ENCODE measurements at regions of chr6 and their contacts with region 1.

Region 1: DNA sequence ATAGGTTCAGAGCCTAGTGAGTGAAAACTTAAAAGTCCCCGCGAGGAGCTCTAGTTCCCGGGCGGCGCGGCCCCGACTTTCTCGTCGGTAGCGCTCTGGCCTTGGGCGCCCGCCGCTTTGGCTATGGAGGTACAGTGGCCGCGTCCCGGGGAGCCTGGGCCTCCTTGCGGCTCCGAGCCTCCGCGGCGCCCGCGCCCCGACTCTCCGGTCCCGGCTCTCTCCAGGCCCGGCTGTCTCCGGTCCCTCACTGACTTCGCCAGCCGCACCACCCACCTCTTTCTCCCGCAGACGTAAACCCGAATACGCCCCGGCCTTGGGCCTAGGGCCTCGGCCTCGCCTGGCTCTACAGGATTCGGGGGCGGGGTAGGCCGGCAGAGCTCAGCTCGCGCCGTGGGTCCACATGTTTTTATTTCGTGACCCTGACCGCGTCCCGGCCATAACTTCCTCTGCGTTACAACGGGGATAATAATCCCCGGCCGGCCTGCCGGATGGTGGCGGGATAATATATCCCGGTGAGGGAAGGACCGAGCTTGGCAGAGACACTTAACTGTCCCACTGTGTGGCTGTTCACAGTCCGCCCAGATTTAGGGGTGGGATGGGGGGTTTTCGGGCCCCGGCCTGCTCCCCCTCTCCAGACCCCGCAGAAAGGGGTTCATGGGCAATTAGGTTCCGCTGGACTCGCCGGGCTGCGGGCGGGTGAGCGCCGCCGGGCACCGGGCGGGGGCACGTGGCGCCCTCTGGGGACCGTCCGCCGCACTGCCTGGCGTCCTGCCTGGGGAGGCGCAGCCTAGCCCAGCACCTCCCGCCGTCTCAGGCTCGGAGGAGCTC is 10.0 kb upstream of the TBX18 start:
- DNase-seq: peak; percentile 30
- H3K4me3 Mint-ChIP-seq: no peak overlapping the region
- H3K27ac Mint-ChIP-seq: no peak overlapping the region
- H3K4me1 Mint-ChIP-seq: peaks cover 8% of the 10 kb centered on the region
- H3K27me3 Mint-ChIP-seq: peaks cover 61% of the 10 kb centered on the region

Region 2: DNA sequence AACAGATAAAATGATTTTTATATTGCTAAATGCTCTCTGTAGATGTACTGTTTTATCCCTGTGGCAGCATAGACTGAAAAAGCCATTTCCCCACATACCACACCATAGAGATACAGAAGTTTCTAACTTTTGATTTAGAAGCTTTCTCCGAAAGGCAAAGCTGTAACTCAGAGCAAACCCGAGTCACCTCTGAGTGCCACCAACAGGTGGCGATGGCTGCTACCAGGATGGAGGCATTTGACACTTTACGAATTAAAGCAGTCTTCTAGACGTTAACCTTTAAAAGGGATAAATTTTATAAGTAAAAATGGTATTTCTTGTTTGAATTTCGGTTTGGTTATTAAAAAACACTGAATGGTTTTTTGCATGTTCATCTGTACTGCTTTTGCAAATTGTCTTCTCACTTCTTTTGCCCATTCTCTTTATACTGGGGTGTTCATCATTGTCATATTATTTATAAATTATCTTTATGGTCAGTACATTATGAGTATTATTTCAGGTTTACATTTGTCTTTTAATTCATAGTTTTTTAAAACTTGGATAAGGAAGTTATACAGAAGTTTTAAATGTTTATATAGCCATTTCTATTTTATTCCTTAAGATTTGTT is 346.0 kb before region 1 on chr6:
- CTCF ChIA-PET with region 1: no interaction called
- intact Hi-C with region 1: loop called (anchors 2 kb)
- DNase-seq: peak; percentile 46
- H3K4me3 Mint-ChIP-seq: no peak overlapping the region
- H3K27ac Mint-ChIP-seq: no peak overlapping the region
- H3K4me1 Mint-ChIP-seq: no peaks in the 10 kb centered on the region
- H3K27me3 Mint-ChIP-seq: peaks cover 3% of the 10 kb centered on the region

Region 3: DNA sequence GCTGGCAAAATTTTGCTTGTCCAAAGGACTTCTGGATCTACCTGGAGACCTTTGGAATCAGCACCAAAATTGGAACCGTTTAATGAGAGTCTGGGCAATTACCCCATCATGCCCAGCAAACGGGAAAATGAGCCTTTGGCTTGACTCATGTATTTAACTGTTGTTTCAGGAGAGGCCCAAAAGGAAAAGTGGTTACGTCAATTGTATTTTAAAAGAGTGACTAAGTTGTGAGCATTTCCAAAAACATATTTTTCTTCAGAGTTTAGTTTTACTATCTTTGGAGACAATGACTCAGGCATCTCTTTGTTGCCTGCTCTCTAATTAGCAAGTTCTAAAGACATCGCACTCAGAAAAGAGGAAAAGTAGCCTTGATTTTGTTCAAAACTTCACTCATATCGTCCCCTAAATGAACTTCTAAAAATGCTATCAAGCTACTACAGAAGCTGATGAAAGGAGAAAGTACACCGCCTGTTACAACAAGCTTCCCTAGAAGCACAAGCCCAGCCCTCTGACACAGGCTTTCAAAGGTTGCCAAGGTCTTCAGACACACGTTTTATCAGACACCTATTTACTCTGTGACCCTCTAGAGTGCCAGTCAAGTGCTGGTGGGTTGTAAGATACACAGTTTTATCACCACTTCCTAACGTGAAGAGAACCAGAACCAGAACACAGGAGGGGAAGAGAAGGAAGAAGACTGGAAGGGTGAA is 156.2 kb before region 1 on chr6:
- CTCF ChIA-PET with region 1: no interaction called
- intact Hi-C with region 1: no loop called
- DNase-seq: no peak
- H3K4me3 Mint-ChIP-seq: no peak overlapping the region
- H3K27ac Mint-ChIP-seq: no peak overlapping the region
- H3K4me1 Mint-ChIP-seq: no peaks in the 10 kb centered on the region
- H3K27me3 Mint-ChIP-seq: no peaks in the 10 kb centered on the region

Region 4: GRCh38 chr6:84671183-84671582 is 103.2 kb before region 1 on chr6:
- CTCF ChIA-PET with region 1: no interaction called
- intact Hi-C with region 1: no loop called
- DNase-seq: no peak
- H3K4me3 Mint-ChIP-seq: no peak overlapping the region
- H3K27ac Mint-ChIP-seq: no peak overlapping the region
- H3K4me1 Mint-ChIP-seq: no peaks in the 10 kb centered on the region
- H3K27me3 Mint-ChIP-seq: no peaks in the 10 kb centered on the region

Region 5: GRCh38 chr6:85348643-85349042 is 574.3 kb after region 1 on chr6:
- CTCF ChIA-PET with region 1: no interaction called
- intact Hi-C with region 1: no loop called
- DNase-seq: no peak
- H3K4me3 Mint-ChIP-seq: no peak overlapping the region
- H3K27ac Mint-ChIP-seq: no peak overlapping the region
- H3K4me1 Mint-ChIP-seq: no peaks in the 10 kb centered on the region
- H3K27me3 Mint-ChIP-seq: peaks cover 14% of the 10 kb centered on the region

Measured in activated naive CD4-positive, alpha-beta T cell treated with anti-CD3 and anti-CD28 coated beads for 36 hours (primary cell).